GM12878 (cell line): ENCODE measurements at regions of chr7 and their contacts with region 1.

Region 1: GRCh38 chr7:91034459-91035368 is 229.5 kb upstream of the FZD1 start:
- DNase-seq: no peak
- ATAC-seq: peak; percentile 89
- H3K4me3 ChIP-seq: no peak overlapping the region
- H3K27ac ChIP-seq: no peak overlapping the region
- H3K4me1 ChIP-seq: no peaks in the 10 kb centered on the region
- H3K27me3 ChIP-seq: no peaks in the 10 kb centered on the region
- CTCF ChIP-seq: peak; percentile 64 to 78 (median 65)
- EP300 ChIP-seq: no peak
- POLR2A ChIP-seq: no peak
- RAD21 ChIP-seq: peak; percentile 95

Region 2: GRCh38 chr7:90455163-90456030 is 579.3 kb before region 1 on chr7:
- CTCF ChIA-PET with region 1: interaction called, 52 read pairs
- POLR2A ChIA-PET with region 1: interaction called, 5 read pairs
- RAD21 ChIA-PET with region 1: interaction called, 21 read pairs
- SMC1A ChIA-PET with region 1: interaction called, 29 read pairs
- in situ Hi-C with region 1: loop called (anchors 5 kb)
- intact Hi-C with region 1: loop called (anchors 1 kb)
- DNase-seq: peak; percentile 7
- ATAC-seq: peak; percentile 93
- H3K4me3 ChIP-seq: no peak overlapping the region
- H3K27ac ChIP-seq: no peak overlapping the region
- H3K4me1 ChIP-seq: no peaks in the 10 kb centered on the region
- H3K27me3 ChIP-seq: no peaks in the 10 kb centered on the region
- CTCF ChIP-seq: peak; percentile 61 to 76 (median 63); a peak in 5 of 6 replicates
- EP300 ChIP-seq: no peak
- POLR2A ChIP-seq: no peak
- RAD21 ChIP-seq: peak; percentile 79

Region 3: DNA sequence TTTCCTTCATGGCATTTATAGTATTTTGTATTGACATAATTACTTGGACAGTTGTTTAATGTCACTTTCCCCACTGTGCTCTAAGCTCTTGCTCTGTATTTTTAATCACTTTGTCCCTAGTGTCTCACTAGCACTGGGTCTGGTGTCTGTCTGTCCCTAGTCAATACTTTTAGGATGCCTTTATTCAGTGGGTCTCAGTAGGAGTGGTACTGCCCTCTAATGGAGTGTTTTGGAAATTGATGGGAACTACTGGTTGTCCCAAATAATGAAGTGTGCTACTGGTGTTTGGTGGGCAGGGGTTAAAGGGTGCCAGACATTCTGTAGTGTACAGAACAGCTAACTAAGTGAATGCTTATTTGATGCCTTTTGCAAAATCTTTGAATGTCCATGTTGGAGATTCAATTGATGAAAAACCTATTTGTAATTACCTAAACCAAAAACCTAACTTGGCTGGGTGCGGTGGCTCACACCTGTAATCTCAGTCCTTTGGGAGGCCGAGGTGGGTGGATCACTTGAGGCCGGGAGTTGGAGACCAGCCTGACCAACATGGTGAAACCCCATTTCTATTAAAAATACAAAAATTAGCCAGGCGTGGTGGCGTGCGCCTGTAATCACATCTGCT is 405.3 kb before region 1 on chr7:
- CTCF ChIA-PET with region 1: interaction called, 14 read pairs
- POLR2A ChIA-PET with region 1: no interaction called
- RAD21 ChIA-PET with region 1: interaction called, 3 read pairs
- SMC1A ChIA-PET with region 1: interaction called, 17 read pairs
- in situ Hi-C with region 1: no loop called
- intact Hi-C with region 1: loop called (anchors 2 kb)
- DNase-seq: peak; percentile 45
- ATAC-seq: peak; percentile 91
- H3K4me3 ChIP-seq: no peak overlapping the region
- H3K27ac ChIP-seq: no peak overlapping the region
- H3K4me1 ChIP-seq: no peaks in the 10 kb centered on the region
- H3K27me3 ChIP-seq: no peaks in the 10 kb centered on the region
- CTCF ChIP-seq: peak; percentile 63 to 71 (median 64)
- EP300 ChIP-seq: no peak
- POLR2A ChIP-seq: no peak
- RAD21 ChIP-seq: peak; percentile 84

Region 4: GRCh38 chr7:90715067-90715466 is 319.6 kb before region 1 on chr7:
- CTCF ChIA-PET with region 1: interaction called, 271 read pairs
- POLR2A ChIA-PET with region 1: interaction called, 11 read pairs
- RAD21 ChIA-PET with region 1: interaction called, 132 read pairs
- SMC1A ChIA-PET with region 1: interaction called, 176 read pairs
- in situ Hi-C with region 1: no loop called
- intact Hi-C with region 1: no loop called
- DNase-seq: no peak
- ATAC-seq: peak; percentile 65
- H3K4me3 ChIP-seq: peak overlapping the region; percentile 52; the same call in 1 of the 2 replicates
- H3K27ac ChIP-seq: peak overlapping the region; percentile 51; the same call in 1 of the 2 replicates
- H3K4me1 ChIP-seq: no peaks in the 10 kb centered on the region
- H3K27me3 ChIP-seq: no peaks in the 10 kb centered on the region
- CTCF ChIP-seq: no peak
- EP300 ChIP-seq: no peak
- POLR2A ChIP-seq: no peak
- RAD21 ChIP-seq: no peak

Region 5: GRCh38 chr7:90857603-90858002 is 177.1 kb before region 1 on chr7:
- CTCF ChIA-PET with region 1: interaction called, 3 read pairs
- POLR2A ChIA-PET with region 1: no interaction called
- RAD21 ChIA-PET with region 1: interaction called, 4 read pairs
- SMC1A ChIA-PET with region 1: interaction called, 3 read pairs
- in situ Hi-C with region 1: no loop called
- intact Hi-C with region 1: loop called (anchors 10 kb)
- DNase-seq: no peak
- ATAC-seq: peak; percentile 44
- H3K4me3 ChIP-seq: no peak overlapping the region
- H3K27ac ChIP-seq: no peak overlapping the region
- H3K4me1 ChIP-seq: peaks cover 6% of the 10 kb centered on the region
- H3K27me3 ChIP-seq: no peaks in the 10 kb centered on the region
- CTCF ChIP-seq: peak in 1 of 3 experiments; percentile 35; a peak in 1 of 6 replicates
- EP300 ChIP-seq: no peak
- POLR2A ChIP-seq: no peak
- RAD21 ChIP-seq: no peak

Region 6: GRCh38 chr7:91020636-91021385 is 13.9 kb before region 1 on chr7:
- CTCF ChIA-PET with region 1: interaction called, 12 read pairs
- POLR2A ChIA-PET with region 1: interaction called, 3 read pairs
- RAD21 ChIA-PET with region 1: interaction called, 4 read pairs
- SMC1A ChIA-PET with region 1: interaction called, 6 read pairs
- in situ Hi-C with region 1: no loop called
- intact Hi-C with region 1: no loop called
- DNase-seq: no peak
- ATAC-seq: no peak
- H3K4me3 ChIP-seq: no peak overlapping the region
- H3K27ac ChIP-seq: no peak overlapping the region
- H3K4me1 ChIP-seq: no peaks in the 10 kb centered on the region
- H3K27me3 ChIP-seq: no peaks in the 10 kb centered on the region
- CTCF ChIP-seq: no peak
- EP300 ChIP-seq: no peak
- POLR2A ChIP-seq: no peak
- RAD21 ChIP-seq: no peak

Region 7: GRCh38 chr7:91180746-91181145 is 146.0 kb after region 1 on chr7:
- CTCF ChIA-PET with region 1: no interaction called
- POLR2A ChIA-PET with region 1: no interaction called
- RAD21 ChIA-PET with region 1: no interaction called
- SMC1A ChIA-PET with region 1: no interaction called
- in situ Hi-C with region 1: no loop called
- intact Hi-C with region 1: no loop called
- DNase-seq: no peak
- ATAC-seq: no peak
- H3K4me3 ChIP-seq: no peak overlapping the region
- H3K27ac ChIP-seq: no peak overlapping the region
- H3K4me1 ChIP-seq: no peaks in the 10 kb centered on the region
- H3K27me3 ChIP-seq: no peaks in the 10 kb centered on the region
- CTCF ChIP-seq: no peak
- EP300 ChIP-seq: no peak
- POLR2A ChIP-seq: no peak
- RAD21 ChIP-seq: no peak